ENCODE measurements at regions of chr7 and their contacts with region 1.

Region 1: GRCh38 chr7:74561898-74562613 is 95.5 kb upstream of the GTF2I start:
- DNase-seq: no peak
- ATAC-seq: no peak
- H3K4me3 ChIP-seq: no peak overlapping the region
- H3K27ac ChIP-seq: no peak overlapping the region
- H3K4me1 ChIP-seq: no peaks in the 10 kb centered on the region
- H3K27me3 ChIP-seq: no peaks in the 10 kb centered on the region
- CTCF ChIP-seq: no peak

Region 2: DNA sequence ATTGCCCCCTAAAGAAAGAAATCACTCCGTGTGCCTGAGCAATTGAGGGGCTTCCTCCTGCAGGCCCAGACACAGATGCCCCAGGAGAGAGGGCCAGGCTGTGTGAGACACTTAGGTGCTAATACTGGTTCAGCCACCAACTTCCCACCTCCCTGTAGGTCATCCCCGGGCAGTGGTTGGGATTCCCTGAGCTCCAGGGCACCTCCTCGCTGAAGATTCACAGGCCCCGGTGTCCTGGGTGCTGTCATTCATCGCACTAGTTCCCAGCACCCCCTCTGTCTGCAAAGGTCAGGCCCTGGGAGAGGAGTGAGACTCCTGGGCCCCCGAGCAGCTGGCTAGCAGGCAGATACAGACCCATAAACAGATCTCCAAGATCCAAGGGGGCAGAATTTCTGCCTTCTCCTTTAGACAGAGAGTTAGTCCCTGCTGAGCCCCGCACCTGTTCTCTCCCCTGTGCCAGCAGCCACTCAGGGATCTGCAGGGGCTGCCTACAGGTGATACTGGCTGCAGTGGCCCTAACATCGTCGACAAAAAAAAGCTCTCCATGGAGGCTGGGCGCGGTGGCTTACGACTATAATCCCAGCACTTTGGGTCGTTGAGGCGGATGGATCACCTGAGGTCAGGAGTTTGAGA is 57.3 kb after region 1 on chr7:
- CTCF ChIA-PET with region 1: no interaction called
- POLR2A ChIA-PET with region 1: interaction called, 13 read pairs
- in situ Hi-C with region 1: no loop called
- intact Hi-C with region 1: no loop called
- DNase-seq: no peak
- ATAC-seq: peak; percentile 32
- H3K4me3 ChIP-seq: no peak overlapping the region
- H3K27ac ChIP-seq: peak overlapping the region; percentile 42; the same call in 1 of the 2 replicates
- H3K4me1 ChIP-seq: peaks cover 17% of the 10 kb centered on the region; the same call in 1 of the 2 replicates
- H3K27me3 ChIP-seq: no peaks in the 10 kb centered on the region
- CTCF ChIP-seq: no peak

Region 3: GRCh38 chr7:74718336-74718735 is 156.3 kb after region 1 on chr7:
- CTCF ChIA-PET with region 1: no interaction called
- POLR2A ChIA-PET with region 1: no interaction called
- in situ Hi-C with region 1: no loop called
- intact Hi-C with region 1: no loop called
- DNase-seq: no peak
- ATAC-seq: no peak
- H3K4me3 ChIP-seq: no peak overlapping the region
- H3K27ac ChIP-seq: no peak overlapping the region
- H3K4me1 ChIP-seq: peaks cover 4% of the 10 kb centered on the region; the same call in 1 of the 2 replicates
- H3K27me3 ChIP-seq: no peaks in the 10 kb centered on the region
- CTCF ChIP-seq: no peak

Measured in Panc1 (cell line).